Breast epithelium (tissue), 4 donors: ENCODE measurements at regions of chr4 and their contacts with region 1.

Region 1: DNA sequence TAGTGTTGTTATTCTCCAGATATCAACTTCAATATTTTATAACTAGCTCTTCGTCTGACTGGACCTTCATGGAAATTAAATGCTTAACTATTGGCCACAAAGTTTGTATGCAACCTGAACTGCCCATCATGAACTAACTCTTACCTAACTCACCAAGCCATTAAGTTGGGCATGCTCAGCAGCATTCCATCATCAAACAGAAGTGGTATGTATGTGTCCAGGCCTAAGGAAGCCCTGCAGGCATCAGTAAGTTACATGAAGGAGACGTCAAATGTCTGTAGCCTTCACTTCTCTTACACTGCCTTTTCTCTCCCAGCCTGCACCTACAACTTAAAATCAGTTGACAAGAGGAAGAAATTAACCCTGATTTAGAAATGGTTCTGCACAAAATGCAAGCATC is 1639.2 kb upstream of the PABPC4L start:
- DNase-seq: no peak
- H3K4me3 ChIP-seq: no peak overlapping the region
- H3K27ac ChIP-seq: no peak overlapping the region
- H3K4me1 ChIP-seq: no peaks in the 10 kb centered on the region
- H3K27me3 ChIP-seq: no peaks in the 10 kb centered on the region
- CTCF ChIP-seq: no peak
- POLR2A ChIP-seq: no peak

Region 2: GRCh38 chr4:134552063-134552462 is 1288.7 kb before region 1 on chr4:
- intact Hi-C with region 1: no loop called
- DNase-seq: no peak
- H3K4me3 ChIP-seq: no peak overlapping the region
- H3K27ac ChIP-seq: no peak overlapping the region
- H3K4me1 ChIP-seq: no peaks in the 10 kb centered on the region
- H3K27me3 ChIP-seq: no peaks in the 10 kb centered on the region
- CTCF ChIP-seq: no peak
- POLR2A ChIP-seq: no peak

Region 3: DNA sequence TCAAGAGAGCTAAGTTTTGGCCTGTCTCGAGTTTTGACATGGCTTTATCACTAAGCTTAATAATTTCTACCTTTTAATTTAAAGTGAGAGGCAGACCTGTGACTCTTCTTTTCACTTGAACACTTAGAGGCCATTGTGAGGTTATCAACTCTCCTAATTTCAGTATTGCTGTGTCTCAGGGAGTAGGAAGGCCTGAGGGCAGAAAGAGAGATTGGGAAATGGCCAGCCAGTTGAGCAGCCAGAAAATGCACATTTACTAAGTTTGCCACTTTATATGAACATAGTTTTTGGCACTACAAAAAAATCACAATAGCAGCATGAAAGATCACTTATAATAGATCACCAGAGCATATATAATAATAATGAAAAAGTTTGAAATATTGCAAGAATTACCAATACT is 71.4 kb before region 1 on chr4:
- intact Hi-C with region 1: no loop called
- DNase-seq: no peak
- H3K4me3 ChIP-seq: no peak overlapping the region
- H3K27ac ChIP-seq: no peak overlapping the region
- H3K4me1 ChIP-seq: no peaks in the 10 kb centered on the region
- H3K27me3 ChIP-seq: no peaks in the 10 kb centered on the region
- CTCF ChIP-seq: no peak
- POLR2A ChIP-seq: no peak

Region 4: DNA sequence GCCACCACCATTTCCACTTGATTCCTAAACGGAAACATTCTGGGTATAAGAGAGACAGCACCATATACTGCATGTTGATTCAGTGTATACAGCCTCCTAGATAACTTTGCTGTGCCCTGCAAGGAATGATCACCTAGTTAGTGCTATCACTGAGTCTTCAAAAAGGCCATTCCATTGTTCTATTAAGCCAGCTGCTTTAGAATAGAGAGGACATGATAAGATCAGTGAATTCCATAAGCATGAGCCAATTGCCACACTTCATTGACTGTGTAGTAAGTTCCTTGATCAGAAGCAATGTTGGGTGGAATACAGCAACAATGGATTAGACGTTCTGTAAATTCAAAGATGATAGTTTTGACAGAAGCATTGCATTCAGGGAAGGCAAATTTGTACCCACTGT is 644.2 kb after region 1 on chr4:
- intact Hi-C with region 1: loop called (anchors 5 kb)
- DNase-seq: no peak
- H3K4me3 ChIP-seq: no peak overlapping the region
- H3K27ac ChIP-seq: no peak overlapping the region
- H3K4me1 ChIP-seq: no peaks in the 10 kb centered on the region
- H3K27me3 ChIP-seq: no peaks in the 10 kb centered on the region
- CTCF ChIP-seq: no peak
- POLR2A ChIP-seq: no peak